Dorsolateral prefrontal cortex (tissue), 120 donors: ENCODE measurements at regions of chr16 and their contacts with region 1.

Region 1: GRCh38 chr16:3282730-3283524 is at the start of gene ZNF263:
- DNase-seq: peak; percentile 90 to 98 (median 96)
- H3K4me3 ChIP-seq: peak within 1 kb of the TSS; percentile 64 to 100 (median 98)
- H3K27ac ChIP-seq: peak within 1 kb of the TSS; percentile 91 to 100 (median 99)
- H3K27me3 ChIP-seq: peaks cover 0 to 2% (median 0%) of the 10 kb centered on the region in 45 donors
- CTCF ChIP-seq: peak in 26 of 56 donors; percentile 5 to 32 (median 18)
- total RNA-seq, gene ZNF263: 20.2 to 37.2 (median 28.3) TPM

Region 2: DNA sequence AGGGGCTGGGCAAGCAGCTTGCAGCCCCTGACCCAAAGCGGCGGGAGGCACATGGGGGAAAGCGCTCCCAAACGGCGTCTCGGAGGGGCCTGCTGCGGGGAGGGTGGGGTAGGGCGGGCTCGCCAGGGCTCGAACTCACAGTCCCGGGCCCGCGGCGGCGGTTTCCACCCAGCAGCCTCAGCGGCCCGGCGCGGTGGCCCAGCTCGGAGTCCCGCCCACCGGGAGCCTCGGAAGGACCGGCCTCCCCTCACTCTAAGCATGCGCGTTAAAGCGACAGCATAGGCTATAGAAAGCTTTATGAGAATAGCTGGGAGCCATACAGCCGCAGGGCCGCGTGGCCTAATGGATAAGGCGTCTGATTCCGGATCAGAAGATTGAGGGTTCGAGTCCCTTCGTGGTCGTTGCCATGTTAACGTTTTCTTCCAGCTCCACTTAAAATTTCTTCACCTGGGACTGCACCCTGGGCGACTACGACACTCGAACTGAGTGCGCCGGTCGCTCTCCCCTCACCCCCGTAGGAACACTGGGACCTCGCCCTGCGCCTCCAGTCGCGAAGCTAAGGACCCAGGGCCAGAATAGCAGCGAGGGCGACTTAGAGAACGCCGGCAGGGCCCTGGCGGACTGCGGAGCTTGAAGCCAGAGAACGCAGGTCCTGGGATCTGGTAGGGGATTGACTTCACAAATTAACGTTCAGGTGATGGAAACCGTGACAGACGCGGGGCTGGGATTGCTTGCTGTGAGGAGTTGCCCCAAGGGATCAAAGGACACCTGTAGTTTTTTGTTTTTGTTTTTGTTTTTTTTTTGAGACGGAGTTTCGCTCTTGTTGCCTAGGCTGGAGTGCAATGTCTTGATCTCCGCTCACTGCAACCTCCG is 132.3 kb before region 1 on chr16:
- intact Hi-C with region 1: loop called in 1 of 2 experiments (anchors 10 kb)
- DNase-seq: peak; percentile 81 to 95 (median 92)
- H3K4me3 ChIP-seq: peak overlapping the region; percentile 42 to 85 (median 72)
- H3K27ac ChIP-seq: peak overlapping the region; percentile 40 to 93 (median 87)
- H3K27me3 ChIP-seq: no peaks in the 10 kb centered on the region
- CTCF ChIP-seq: peak in 31 of 56 donors; percentile 6 to 55 (median 23)

Region 3: GRCh38 chr16:3234543-3235541 is 48.1 kb before region 1 on chr16 and contains the start of gene ZNF200:
- intact Hi-C with region 1: loop called (anchors 1 to 5 kb)
- DNase-seq: peak; percentile 95 to 97 (median 95)
- H3K4me3 ChIP-seq: peak within 1 kb of the TSS; percentile 66 to 100 (median 93)
- H3K27ac ChIP-seq: peak within 1 kb of the TSS; percentile 88 to 100 (median 98)
- H3K27me3 ChIP-seq: no peaks in the 10 kb centered on the region
- CTCF ChIP-seq: peak in 24 of 56 donors; percentile 11 to 51 (median 28)
- total RNA-seq, gene ZNF200: 3.7 to 13.3 (median 8.7) TPM

Region 4: GRCh38 chr16:3457434-3458252 is 174.7 kb after region 1 on chr16:
- intact Hi-C with region 1: loop called (anchors 5 kb)
- DNase-seq: peak; percentile 83 to 94 (median 90)
- H3K4me3 ChIP-seq: peak overlapping the region; percentile 62 to 97 (median 88)
- H3K27ac ChIP-seq: peak overlapping the region; percentile 84 to 100 (median 99)
- H3K27me3 ChIP-seq: no peaks in the 10 kb centered on the region
- CTCF ChIP-seq: peak in 53 of 56 donors; percentile 23 to 77 (median 48)

Region 5: GRCh38 chr16:3503523-3503922 is 220.6 kb after region 1 on chr16:
- intact Hi-C with region 1: loop called (anchors 5 kb)
- DNase-seq: peak in 1 of 10 donors; percentile 12
- H3K4me3 ChIP-seq: no peak overlapping the region
- H3K27ac ChIP-seq: no peak overlapping the region
- H3K27me3 ChIP-seq: no peaks in the 10 kb centered on the region
- CTCF ChIP-seq: no peak

Region 6: GRCh38 chr16:3542601-3543373 is 259.9 kb after region 1 on chr16:
- intact Hi-C with region 1: no loop called
- DNase-seq: no peak
- H3K4me3 ChIP-seq: no peak overlapping the region
- H3K27ac ChIP-seq: no peak overlapping the region
- H3K27me3 ChIP-seq: no peaks in the 10 kb centered on the region
- CTCF ChIP-seq: no peak